ENCODE measurements at regions of chr6 and their contacts with region 1.

Region 1: GRCh38 chr6:158972241-158973233 is 27.5 kb downstream of the RSPH3 start:
- DNase-seq: peak; percentile 77
- ATAC-seq: no peak
- H3K4me3 ChIP-seq: no peak overlapping the region
- H3K4me3 Mint-ChIP-seq: no peak overlapping the region
- H3K27ac ChIP-seq: no peak overlapping the region
- H3K27ac Mint-ChIP-seq: no peak overlapping the region
- H3K4me1 ChIP-seq: peaks cover 0 to 4% of the 10 kb centered on the region in 2 donors
- H3K4me1 Mint-ChIP-seq: peaks cover 6% of the 10 kb centered on the region
- H3K27me3 ChIP-seq: no peaks in the 10 kb centered on the region
- H3K27me3 Mint-ChIP-seq: no peaks in the 10 kb centered on the region
- CTCF ChIP-seq: peak; percentile 90

Region 2: DNA sequence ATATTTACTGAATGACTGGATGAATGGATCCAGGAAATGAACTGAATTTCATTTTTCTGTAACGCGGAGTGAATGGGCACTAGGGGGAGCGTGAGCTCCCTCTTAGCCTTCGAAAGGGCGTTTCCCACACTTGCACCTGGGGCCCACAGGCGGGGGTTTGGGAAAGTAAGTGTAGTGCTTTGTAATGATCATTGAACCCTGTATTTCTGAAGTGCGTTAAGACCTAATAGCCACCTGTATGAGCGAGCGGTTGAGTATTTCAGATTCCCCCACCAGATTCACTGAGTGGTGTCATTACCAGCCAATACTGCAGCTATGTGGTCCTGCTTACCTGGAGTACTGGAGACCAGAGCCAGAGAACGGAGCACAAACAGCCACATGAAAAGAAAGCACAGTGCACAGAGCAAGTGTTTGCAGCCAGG is 312.2 kb before region 1 on chr6:
- CTCF ChIA-PET with region 1: interaction called, 56 read pairs
- POLR2A ChIA-PET with region 1: interaction called, 3 read pairs
- intact Hi-C with region 1: loop called (anchors 1 kb)
- DNase-seq: peak; percentile 72
- ATAC-seq: peak; percentile 84
- H3K4me3 ChIP-seq: no peak overlapping the region
- H3K4me3 Mint-ChIP-seq: no peak overlapping the region
- H3K27ac ChIP-seq: no peak overlapping the region
- H3K27ac Mint-ChIP-seq: no peak overlapping the region
- H3K4me1 ChIP-seq: peaks cover 9 to 12% of the 10 kb centered on the region in 2 donors
- H3K4me1 Mint-ChIP-seq: peaks cover 8% of the 10 kb centered on the region
- H3K27me3 ChIP-seq: peaks cover 0 to 10% (median 5%) of the 10 kb centered on the region in 4 experiments
- H3K27me3 Mint-ChIP-seq: peaks cover 13% of the 10 kb centered on the region
- CTCF ChIP-seq: peak; percentile 77

Region 3: DNA sequence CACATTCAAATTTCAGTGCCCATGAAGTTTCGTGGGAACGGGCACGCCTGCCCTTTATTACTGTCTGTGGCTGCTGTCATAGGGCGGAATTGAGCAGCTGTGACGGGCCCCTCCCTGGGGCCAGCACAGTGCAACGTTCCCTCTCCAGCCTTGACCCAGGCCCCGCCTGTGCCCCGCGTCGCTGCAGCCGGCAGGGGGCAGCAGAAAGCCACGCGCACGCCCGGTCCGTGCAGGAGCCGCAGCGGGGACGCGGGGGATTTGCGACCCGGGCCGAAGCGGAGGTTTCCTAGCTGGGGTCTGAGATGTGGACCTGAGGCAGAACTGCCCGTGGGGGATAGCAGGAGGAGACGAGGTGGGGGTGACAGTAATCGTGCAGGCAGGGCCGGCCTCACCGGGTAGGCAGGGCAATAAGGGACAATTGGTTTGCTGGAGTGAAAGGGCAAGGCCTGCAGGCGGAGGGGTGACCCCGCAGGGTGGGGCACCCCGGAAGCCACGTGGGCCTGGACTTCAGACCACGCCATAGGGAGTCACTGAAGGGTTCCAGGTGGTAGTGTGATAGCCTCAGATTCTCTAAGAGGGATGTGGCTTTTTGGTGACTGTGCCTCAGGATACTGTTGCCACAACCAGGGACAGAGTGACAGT is 268.2 kb before region 1 on chr6:
- CTCF ChIA-PET with region 1: interaction called, 119 read pairs
- POLR2A ChIA-PET with region 1: no interaction called
- intact Hi-C with region 1: loop called (anchors 1 kb)
- DNase-seq: peak; percentile 90
- ATAC-seq: peak; percentile 98
- H3K4me3 ChIP-seq: peak overlapping the region in 4 of 5 experiments; percentile 33 to 59 (median 52)
- H3K4me3 Mint-ChIP-seq: peak overlapping the region; percentile 92
- H3K27ac ChIP-seq: peak overlapping the region in 1 of 2 donors; percentile 36
- H3K27ac Mint-ChIP-seq: peak overlapping the region; percentile 89
- H3K4me1 ChIP-seq: peaks cover 19 to 30% of the 10 kb centered on the region in 2 donors
- H3K4me1 Mint-ChIP-seq: peaks cover 27% of the 10 kb centered on the region
- H3K27me3 ChIP-seq: no peaks in the 10 kb centered on the region
- H3K27me3 Mint-ChIP-seq: no peaks in the 10 kb centered on the region
- CTCF ChIP-seq: peak; percentile 99

Region 4: GRCh38 chr6:158729914-158730907 is 242.3 kb before region 1 on chr6:
- CTCF ChIA-PET with region 1: no interaction called
- POLR2A ChIA-PET with region 1: no interaction called
- intact Hi-C with region 1: no loop called
- DNase-seq: no peak
- ATAC-seq: no peak
- H3K4me3 ChIP-seq: no peak overlapping the region
- H3K4me3 Mint-ChIP-seq: no peak overlapping the region
- H3K27ac ChIP-seq: no peak overlapping the region
- H3K27ac Mint-ChIP-seq: no peak overlapping the region
- H3K4me1 ChIP-seq: no peaks in the 10 kb centered on the region
- H3K4me1 Mint-ChIP-seq: no peaks in the 10 kb centered on the region
- H3K27me3 ChIP-seq: no peaks in the 10 kb centered on the region
- H3K27me3 Mint-ChIP-seq: no peaks in the 10 kb centered on the region
- CTCF ChIP-seq: no peak

Region 5: GRCh38 chr6:158769771-158770432 is 202.6 kb before region 1 on chr6:
- CTCF ChIA-PET with region 1: interaction called, 10 read pairs
- POLR2A ChIA-PET with region 1: no interaction called
- intact Hi-C with region 1: no loop called
- DNase-seq: no peak
- ATAC-seq: no peak
- H3K4me3 ChIP-seq: no peak overlapping the region
- H3K4me3 Mint-ChIP-seq: no peak overlapping the region
- H3K27ac ChIP-seq: no peak overlapping the region
- H3K27ac Mint-ChIP-seq: peak overlapping the region; percentile 76
- H3K4me1 ChIP-seq: no peaks in the 10 kb centered on the region
- H3K4me1 Mint-ChIP-seq: no peaks in the 10 kb centered on the region
- H3K27me3 ChIP-seq: no peaks in the 10 kb centered on the region
- H3K27me3 Mint-ChIP-seq: no peaks in the 10 kb centered on the region
- CTCF ChIP-seq: no peak

Region 6: GRCh38 chr6:158793432-158793831 is 179.1 kb before region 1 on chr6:
- CTCF ChIA-PET with region 1: interaction called, 79 read pairs
- POLR2A ChIA-PET with region 1: interaction called, 3 read pairs
- intact Hi-C with region 1: loop called (anchors 1 kb)
- DNase-seq: peak; percentile 68
- ATAC-seq: peak; percentile 35
- H3K4me3 ChIP-seq: no peak overlapping the region
- H3K4me3 Mint-ChIP-seq: peak overlapping the region; percentile 54
- H3K27ac ChIP-seq: peak overlapping the region; percentile 40 to 54
- H3K27ac Mint-ChIP-seq: peak overlapping the region; percentile 61
- H3K4me1 ChIP-seq: peaks cover 91 to 92% of the 10 kb centered on the region in 2 donors
- H3K4me1 Mint-ChIP-seq: peaks cover 91% of the 10 kb centered on the region
- H3K27me3 ChIP-seq: no peaks in the 10 kb centered on the region
- H3K27me3 Mint-ChIP-seq: no peaks in the 10 kb centered on the region
- CTCF ChIP-seq: peak; percentile 68

Region 7: GRCh38 chr6:158835616-158836221 is 136.8 kb before region 1 on chr6:
- CTCF ChIA-PET with region 1: no interaction called
- POLR2A ChIA-PET with region 1: no interaction called
- intact Hi-C with region 1: no loop called
- DNase-seq: no peak
- ATAC-seq: peak; percentile 57
- H3K4me3 ChIP-seq: no peak overlapping the region
- H3K4me3 Mint-ChIP-seq: no peak overlapping the region
- H3K27ac ChIP-seq: no peak overlapping the region
- H3K27ac Mint-ChIP-seq: peak overlapping the region; percentile 33
- H3K4me1 ChIP-seq: peaks cover 17 to 24% of the 10 kb centered on the region in 2 donors
- H3K4me1 Mint-ChIP-seq: peaks cover 26% of the 10 kb centered on the region
- H3K27me3 ChIP-seq: no peaks in the 10 kb centered on the region
- H3K27me3 Mint-ChIP-seq: no peaks in the 10 kb centered on the region
- CTCF ChIP-seq: no peak

Region 8: DNA sequence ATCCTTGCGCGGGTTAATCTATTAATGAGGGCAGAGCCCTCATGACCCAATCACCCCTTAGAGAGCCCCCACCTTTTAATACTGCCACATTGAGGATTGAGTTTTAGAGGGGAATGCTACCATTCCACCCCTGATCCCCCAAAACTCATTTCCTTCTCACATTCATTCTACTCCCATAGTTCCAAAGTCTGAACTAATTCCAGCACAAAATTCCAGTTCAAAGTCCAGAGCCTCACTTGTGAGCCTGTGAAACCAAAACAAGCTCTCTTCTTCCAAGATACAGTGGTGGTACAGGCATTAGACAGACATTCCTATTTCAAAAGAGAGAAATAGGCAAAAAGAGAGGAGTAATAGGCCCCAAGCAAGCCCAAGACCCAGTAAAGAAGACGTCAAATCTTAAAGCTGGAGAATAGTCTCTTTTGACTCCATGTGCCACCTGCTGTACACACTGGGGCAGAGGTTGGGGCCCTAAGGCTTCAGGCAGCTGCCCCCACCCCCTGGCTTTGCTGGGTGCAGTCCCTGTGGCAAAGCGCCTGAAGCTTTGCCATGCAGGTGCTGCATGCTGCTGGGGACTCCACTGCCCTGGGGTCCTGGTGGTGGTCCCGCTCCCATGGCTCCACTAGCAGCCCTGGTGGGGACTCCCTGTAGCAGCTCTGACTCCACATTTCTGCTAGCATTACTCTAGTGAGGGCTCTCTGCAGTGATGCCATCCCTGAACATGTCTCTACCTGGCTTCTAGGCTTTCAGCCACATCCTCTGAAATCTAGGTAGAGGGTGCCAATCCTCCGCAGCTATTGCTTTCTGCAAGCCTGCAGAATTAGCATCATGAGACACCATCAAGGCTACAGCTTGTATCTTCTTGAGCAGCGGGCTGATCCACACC is 13.8 kb before region 1 on chr6:
- CTCF ChIA-PET with region 1: interaction called, 31 read pairs
- POLR2A ChIA-PET with region 1: no interaction called
- intact Hi-C with region 1: no loop called
- DNase-seq: peak; percentile 71
- ATAC-seq: peak; percentile 82
- H3K4me3 ChIP-seq: no peak overlapping the region
- H3K4me3 Mint-ChIP-seq: no peak overlapping the region
- H3K27ac ChIP-seq: no peak overlapping the region
- H3K27ac Mint-ChIP-seq: peak overlapping the region; percentile 69
- H3K4me1 ChIP-seq: peaks cover 5 to 10% of the 10 kb centered on the region in 2 donors
- H3K4me1 Mint-ChIP-seq: peaks cover 23% of the 10 kb centered on the region
- H3K27me3 ChIP-seq: no peaks in the 10 kb centered on the region
- H3K27me3 Mint-ChIP-seq: no peaks in the 10 kb centered on the region
- CTCF ChIP-seq: peak; percentile 42

Region 9: DNA sequence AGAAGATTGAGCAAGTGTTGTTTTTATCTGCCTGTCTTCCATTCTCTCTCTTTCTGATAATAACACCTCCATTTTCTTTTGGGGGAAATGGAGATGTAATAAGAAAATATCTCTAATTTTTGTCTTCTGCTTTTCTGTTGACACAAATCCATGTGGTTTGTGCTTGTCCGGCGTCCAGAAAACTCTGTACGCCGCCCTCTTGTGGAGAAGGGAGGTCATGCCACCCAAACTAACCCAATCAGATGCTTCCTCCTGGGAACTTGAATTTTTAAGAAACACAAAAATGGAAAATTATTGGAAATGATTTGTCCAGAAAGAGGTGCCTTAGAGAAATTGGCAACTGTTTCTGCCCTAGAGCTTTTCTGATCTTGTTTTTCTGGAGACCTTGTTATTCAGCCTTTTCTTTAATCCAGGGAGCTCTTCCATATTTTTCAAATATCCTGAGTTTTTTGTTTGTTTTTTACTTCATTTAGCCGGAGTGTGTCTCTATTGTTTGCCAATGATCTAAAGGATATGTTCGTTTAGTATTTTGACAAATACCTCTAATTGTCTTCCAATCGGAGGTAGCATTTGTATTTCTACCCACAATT is 178.8 kb after region 1 on chr6:
- CTCF ChIA-PET with region 1: no interaction called
- POLR2A ChIA-PET with region 1: no interaction called
- intact Hi-C with region 1: no loop called
- DNase-seq: peak; percentile 74
- ATAC-seq: peak; percentile 79
- H3K4me3 ChIP-seq: no peak overlapping the region
- H3K4me3 Mint-ChIP-seq: no peak overlapping the region
- H3K27ac ChIP-seq: no peak overlapping the region
- H3K27ac Mint-ChIP-seq: no peak overlapping the region
- H3K4me1 ChIP-seq: peaks cover 3 to 4% of the 10 kb centered on the region in 2 donors
- H3K4me1 Mint-ChIP-seq: peaks cover 3% of the 10 kb centered on the region
- H3K27me3 ChIP-seq: no peaks in the 10 kb centered on the region
- H3K27me3 Mint-ChIP-seq: peaks cover 3% of the 10 kb centered on the region
- CTCF ChIP-seq: peak; percentile 94

Region 10: DNA sequence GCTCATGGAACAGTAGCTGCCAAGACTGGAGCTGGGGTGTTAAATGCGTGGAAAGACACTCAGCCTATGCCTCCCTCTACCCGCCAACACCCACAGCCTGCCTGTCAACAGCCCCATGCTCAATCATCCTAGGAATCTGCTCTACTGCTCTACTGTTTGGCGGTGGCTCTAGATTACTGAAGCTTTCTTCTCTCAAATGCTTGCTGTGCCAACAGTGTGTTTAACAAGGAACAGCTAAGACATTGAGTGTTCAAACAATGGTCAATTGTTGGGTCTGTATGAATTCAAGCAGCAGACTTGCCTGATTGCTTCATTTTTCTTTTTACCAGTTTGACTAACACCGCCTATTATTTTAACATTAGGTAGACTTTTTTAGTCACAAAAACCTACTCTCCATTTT is 461.9 kb after region 1 on chr6:
- CTCF ChIA-PET with region 1: no interaction called
- POLR2A ChIA-PET with region 1: no interaction called
- intact Hi-C with region 1: no loop called
- DNase-seq: no peak
- ATAC-seq: no peak
- H3K4me3 ChIP-seq: no peak overlapping the region
- H3K4me3 Mint-ChIP-seq: no peak overlapping the region
- H3K27ac ChIP-seq: no peak overlapping the region
- H3K27ac Mint-ChIP-seq: no peak overlapping the region
- H3K4me1 ChIP-seq: no peaks in the 10 kb centered on the region
- H3K4me1 Mint-ChIP-seq: no peaks in the 10 kb centered on the region
- H3K27me3 ChIP-seq: no peaks in the 10 kb centered on the region
- H3K27me3 Mint-ChIP-seq: peaks cover 18% of the 10 kb centered on the region
- CTCF ChIP-seq: no peak

Measured in B cell (primary cell).